ENCODE measurements at regions of chr11 and their contacts with region 1.

Region 1: DNA sequence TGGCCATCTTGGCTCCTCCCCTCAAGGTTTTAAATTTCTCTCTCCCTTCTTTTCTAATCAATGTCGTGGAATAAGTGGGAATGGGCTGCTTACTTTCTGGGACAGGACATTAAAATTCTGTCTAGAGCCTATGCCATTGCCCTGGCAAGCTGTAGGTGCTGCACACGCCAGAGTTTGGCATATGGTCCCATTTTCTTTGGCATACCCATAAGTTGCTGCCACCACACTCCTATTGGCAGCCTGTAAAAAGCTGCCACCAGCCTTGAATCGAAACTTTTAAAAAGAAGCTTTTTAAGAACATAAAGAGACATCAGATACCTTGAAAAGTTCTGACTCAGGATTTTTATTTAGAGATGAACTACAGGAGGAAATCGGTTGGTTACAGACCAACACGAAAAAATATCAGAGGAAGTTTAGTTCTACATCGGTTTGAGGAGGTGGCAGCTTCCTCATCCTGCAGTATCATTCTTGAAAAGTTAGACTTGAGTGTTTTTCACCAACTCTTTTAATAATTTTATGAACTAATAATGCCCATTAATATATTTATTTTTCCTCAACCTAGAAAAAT is 517.8 kb upstream of the ANO5 start:
- DNase-seq: no peak

Region 2: GRCh38 chr11:21446939-21447590 is 228.1 kb before region 1 on chr11:
- intact Hi-C with region 1: loop called in 1 of 2 experiments (anchors 5 kb)
- DNase-seq: no peak

Region 3: DNA sequence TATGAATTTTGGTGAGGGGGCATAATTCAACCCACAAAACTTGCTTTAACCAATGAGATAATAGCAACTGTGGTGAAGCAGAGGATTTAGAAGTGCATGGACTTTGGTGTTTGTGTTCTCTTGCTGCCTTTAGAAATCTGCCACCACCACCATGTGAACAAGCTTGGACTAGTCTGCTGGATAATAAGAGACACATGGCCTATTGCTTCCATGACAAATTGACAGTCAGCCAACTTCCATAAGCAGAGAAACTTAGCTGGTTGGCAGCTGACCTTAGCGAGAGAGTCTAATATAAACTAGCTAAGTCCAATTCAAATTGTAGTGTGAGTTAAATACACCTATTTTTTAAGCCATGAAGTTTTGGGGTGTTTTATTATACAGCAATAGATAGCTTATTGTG is 35.7 kb after region 1 on chr11:
- intact Hi-C with region 1: no loop called
- DNase-seq: no peak

Region 4: DNA sequence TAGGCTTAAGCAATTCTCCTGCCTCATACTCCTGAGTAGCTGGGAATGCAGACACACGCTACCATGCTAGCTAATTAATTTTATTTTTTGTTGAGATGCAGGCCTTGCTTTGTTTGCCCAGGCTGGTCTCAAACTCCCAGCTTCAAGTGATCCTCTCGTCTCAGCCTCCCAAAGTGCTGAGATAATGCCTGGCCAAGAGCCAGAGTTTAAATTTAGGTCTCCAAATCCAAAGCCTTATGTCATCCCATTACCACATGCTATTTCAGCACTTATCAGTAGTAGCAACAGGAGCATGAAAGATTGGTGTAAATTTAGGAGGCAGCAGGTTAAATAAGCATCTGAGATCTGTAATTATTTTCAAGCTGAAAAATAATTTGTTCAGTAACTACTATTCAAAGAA is 191.6 kb after region 1 on chr11:
- intact Hi-C with region 1: no loop called
- DNase-seq: no peak

Measured in posterior vena cava (tissue), 2 donors.